IMR-90 (cell line): ENCODE measurements at regions of chr7 and their contacts with region 1.

Region 1: DNA sequence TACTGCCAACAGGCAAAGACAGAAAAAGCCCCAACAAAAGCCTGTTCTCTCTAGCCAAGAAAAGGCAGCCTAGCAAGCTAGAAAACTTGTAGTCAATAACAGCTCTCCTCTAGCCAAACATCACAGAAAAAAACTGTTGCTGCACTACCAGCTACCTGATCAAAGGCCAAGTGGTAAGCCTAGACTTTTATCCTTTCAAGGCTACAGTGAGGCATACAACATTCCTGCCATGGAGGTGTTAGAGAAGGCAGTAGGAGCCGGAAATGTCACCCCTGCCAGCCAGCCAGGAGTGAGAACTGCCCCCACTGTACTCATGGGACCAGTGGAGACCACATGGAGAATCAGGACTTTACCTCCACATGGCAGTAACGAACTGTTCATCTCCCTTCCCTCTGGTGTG is 31.2 kb downstream of the CCDC126 start:
- DNase-seq: no peak
- ATAC-seq: no peak
- H3K4me3 ChIP-seq: no peak overlapping the region
- H3K27ac ChIP-seq: no peak overlapping the region
- H3K4me1 ChIP-seq: no peaks in the 10 kb centered on the region
- H3K27me3 ChIP-seq: no peaks in the 10 kb centered on the region
- CTCF ChIP-seq: no peak
- POLR2A ChIP-seq: no peak
- RAD21 ChIP-seq: no peak

Region 2: DNA sequence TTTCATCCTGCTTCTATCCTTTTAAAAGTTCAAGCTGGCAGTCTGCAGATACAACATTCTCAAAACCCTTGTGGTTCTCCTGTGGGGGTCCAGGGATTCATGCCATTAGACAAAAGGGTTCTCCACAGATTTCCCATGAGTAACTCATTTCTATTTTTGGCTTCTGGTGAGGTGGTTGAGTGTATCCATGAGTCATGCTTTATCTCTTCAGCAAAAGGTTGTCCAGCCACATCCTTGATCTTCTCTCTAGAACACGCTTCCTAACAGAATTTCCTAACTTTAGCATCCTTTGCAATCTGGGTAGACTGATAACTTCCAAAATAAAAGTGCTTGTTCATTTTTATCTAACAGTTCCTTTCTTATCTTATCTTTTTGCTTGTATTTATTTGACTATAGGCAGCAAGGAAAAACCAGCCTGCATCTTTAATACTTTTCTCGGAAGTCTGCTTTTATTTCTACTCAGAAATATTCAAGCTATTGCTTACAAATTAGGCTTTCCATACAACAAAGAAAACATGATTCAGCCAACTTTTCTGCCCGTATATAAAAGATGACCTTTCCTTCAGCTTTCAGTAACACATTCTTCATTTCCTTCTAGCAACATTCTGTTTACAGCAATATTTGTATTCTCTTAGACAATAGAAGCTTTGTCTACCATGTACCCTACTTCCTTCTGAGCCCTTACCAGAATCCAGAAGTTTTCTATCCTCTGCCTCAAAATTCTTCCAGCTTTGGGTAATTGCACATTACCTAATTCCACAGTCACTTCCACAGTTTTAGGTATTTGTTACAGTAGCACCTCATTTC is 980.7 kb before region 1 on chr7:
- CTCF ChIA-PET with region 1: no interaction called
- POLR2A ChIA-PET with region 1: no interaction called
- dilution Hi-C with region 1: no loop called
- in situ Hi-C with region 1: no loop called
- intact Hi-C with region 1: no loop called
- DNase-seq: peak; percentile 98
- ATAC-seq: peak; percentile 67
- H3K4me3 ChIP-seq: no peak overlapping the region
- H3K27ac ChIP-seq: no peak overlapping the region
- H3K4me1 ChIP-seq: peaks cover 5% of the 10 kb centered on the region; the same call in 1 of the 2 replicates
- H3K27me3 ChIP-seq: no peaks in the 10 kb centered on the region
- CTCF ChIP-seq: no peak
- POLR2A ChIP-seq: peak; percentile 33; the same call in 1 of the 2 replicates
- RAD21 ChIP-seq: peak; percentile 32; the same call in 1 of the 2 replicates

Region 3: GRCh38 chr7:23645822-23646221 is 17.5 kb after region 1 on chr7:
- CTCF ChIA-PET with region 1: no interaction called
- POLR2A ChIA-PET with region 1: interaction called, 13 read pairs
- dilution Hi-C with region 1: no loop called
- in situ Hi-C with region 1: no loop called
- intact Hi-C with region 1: no loop called
- DNase-seq: no peak
- ATAC-seq: no peak
- H3K4me3 ChIP-seq: no peak overlapping the region
- H3K27ac ChIP-seq: no peak overlapping the region
- H3K4me1 ChIP-seq: no peaks in the 10 kb centered on the region
- H3K27me3 ChIP-seq: no peaks in the 10 kb centered on the region
- CTCF ChIP-seq: no peak
- POLR2A ChIP-seq: no peak
- RAD21 ChIP-seq: no peak

Region 4: DNA sequence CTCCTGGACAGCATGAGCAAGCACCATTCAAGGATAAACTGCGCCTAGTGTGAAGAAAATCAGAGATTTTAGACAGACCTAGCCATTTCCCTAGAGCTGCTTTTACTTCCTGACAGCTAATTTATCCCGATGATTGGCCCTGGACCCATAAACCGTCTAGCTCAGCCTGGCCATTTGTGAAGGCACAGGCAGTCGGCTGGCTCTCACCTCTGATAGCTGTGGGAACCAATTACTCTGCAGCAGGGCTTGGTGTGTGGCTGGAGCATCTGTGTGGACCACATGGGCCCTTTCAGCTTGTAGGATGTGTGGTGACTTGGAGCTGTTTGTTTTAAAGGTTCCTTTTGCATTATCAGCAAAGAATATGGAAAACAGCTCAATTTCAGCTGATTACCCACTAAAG is 544.5 kb after region 1 on chr7:
- CTCF ChIA-PET with region 1: no interaction called
- POLR2A ChIA-PET with region 1: no interaction called
- dilution Hi-C with region 1: no loop called
- in situ Hi-C with region 1: no loop called
- intact Hi-C with region 1: no loop called
- DNase-seq: no peak
- ATAC-seq: no peak
- H3K4me3 ChIP-seq: no peak overlapping the region
- H3K27ac ChIP-seq: no peak overlapping the region
- H3K4me1 ChIP-seq: no peaks in the 10 kb centered on the region
- H3K27me3 ChIP-seq: no peaks in the 10 kb centered on the region
- CTCF ChIP-seq: no peak
- POLR2A ChIP-seq: no peak
- RAD21 ChIP-seq: no peak